ENCODE measurements at regions of chrX and their contacts with region 1.

Region 1: GRCh38 chrX:46903458-46904242 is 8.6 kb upstream of the JADE3 start:
- DNase-seq: peak; percentile 57
- ATAC-seq: peak; percentile 100
- H3K4me3 ChIP-seq: peak overlapping the region; percentile 57 to 78
- H3K27ac ChIP-seq: no peak overlapping the region
- H3K4me1 ChIP-seq: 0 out of 2 replicates have a peak, but pooled peaks cover 3% of the 10 kb centered on the region
- H3K27me3 ChIP-seq: no peaks in the 10 kb centered on the region
- CTCF ChIP-seq: peak; percentile 93

Region 2: GRCh38 chrX:46758163-46758905 is 145.3 kb before region 1 on chrX:
- CTCF ChIA-PET with region 1: no interaction called
- POLR2A ChIA-PET with region 1: no interaction called
- in situ Hi-C with region 1: no loop called
- intact Hi-C with region 1: no loop called
- DNase-seq: no peak
- ATAC-seq: peak; percentile 62
- H3K4me3 ChIP-seq: peak overlapping the region; percentile 65 to 90
- H3K27ac ChIP-seq: peak overlapping the region; percentile 83
- H3K4me1 ChIP-seq: peaks cover 16% of the 10 kb centered on the region
- H3K27me3 ChIP-seq: no peaks in the 10 kb centered on the region
- CTCF ChIP-seq: no peak

Region 3: GRCh38 chrX:46836701-46837557 is 66.7 kb before region 1 on chrX and contains the start of gene RP2:
- CTCF ChIA-PET with region 1: no interaction called
- POLR2A ChIA-PET with region 1: no interaction called
- in situ Hi-C with region 1: no loop called
- intact Hi-C with region 1: no loop called
- DNase-seq: peak; percentile 61
- ATAC-seq: peak; percentile 99
- H3K4me3 ChIP-seq: peak within 1 kb of the TSS; percentile 92 to 94
- H3K27ac ChIP-seq: peak within 1 kb of the TSS; percentile 93
- H3K4me1 ChIP-seq: peaks cover 8% of the 10 kb centered on the region
- H3K27me3 ChIP-seq: no peaks in the 10 kb centered on the region
- CTCF ChIP-seq: no peak
- total RNA-seq, gene RP2: 17.3 TPM

Region 4: DNA sequence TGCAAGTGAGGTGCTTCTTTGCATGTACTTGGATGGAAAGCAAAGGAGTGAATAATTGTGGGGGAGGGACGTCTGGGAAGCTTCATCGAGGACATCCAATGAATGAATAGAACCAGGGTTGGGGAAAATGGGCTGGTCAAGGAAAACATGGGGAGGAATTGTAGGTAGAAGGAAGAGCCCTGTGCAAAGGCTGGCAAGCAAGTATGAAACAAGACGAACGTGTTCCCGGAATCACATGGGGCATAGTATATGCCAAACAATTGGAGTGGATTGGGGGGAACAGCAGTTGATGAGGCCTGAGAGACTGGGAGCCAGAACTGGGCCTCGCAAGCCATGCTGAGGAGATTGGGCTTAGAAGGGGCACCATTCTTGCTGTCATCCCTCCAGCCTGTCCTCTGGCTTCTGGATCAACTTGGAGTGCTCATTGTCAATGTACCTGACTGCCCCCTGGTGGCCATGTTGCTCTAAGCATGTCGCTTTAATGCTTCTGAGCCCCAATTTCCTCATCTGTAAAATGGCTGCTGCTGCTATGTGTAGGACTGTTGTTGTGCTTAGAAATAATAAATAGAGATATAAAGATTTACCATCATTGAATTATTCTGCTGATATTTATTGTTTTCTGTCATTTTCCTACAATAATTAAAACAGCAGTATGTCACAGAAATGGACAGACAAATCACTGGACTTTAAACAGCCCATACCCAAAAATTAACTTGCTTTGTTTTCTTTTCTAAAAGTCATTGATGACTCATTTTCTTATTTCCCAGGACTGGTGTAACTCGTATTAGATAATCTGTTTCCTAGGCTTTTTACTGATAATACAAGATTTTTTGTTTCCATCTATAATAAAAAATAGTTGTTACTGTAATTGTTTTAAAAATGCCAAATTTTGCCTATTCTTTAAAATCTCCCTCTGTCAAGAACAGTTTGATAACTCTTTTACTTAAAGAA is 75.0 kb after region 1 on chrX:
- CTCF ChIA-PET with region 1: no interaction called
- POLR2A ChIA-PET with region 1: no interaction called
- in situ Hi-C with region 1: no loop called
- intact Hi-C with region 1: loop called (anchors 2 kb)
- DNase-seq: peak; percentile 64
- ATAC-seq: peak; percentile 96
- H3K4me3 ChIP-seq: no peak overlapping the region
- H3K27ac ChIP-seq: peak overlapping the region; percentile 66
- H3K4me1 ChIP-seq: peaks cover 12% of the 10 kb centered on the region; the same call in 1 of the 2 replicates
- H3K27me3 ChIP-seq: no peaks in the 10 kb centered on the region
- CTCF ChIP-seq: peak; percentile 84

Region 5: DNA sequence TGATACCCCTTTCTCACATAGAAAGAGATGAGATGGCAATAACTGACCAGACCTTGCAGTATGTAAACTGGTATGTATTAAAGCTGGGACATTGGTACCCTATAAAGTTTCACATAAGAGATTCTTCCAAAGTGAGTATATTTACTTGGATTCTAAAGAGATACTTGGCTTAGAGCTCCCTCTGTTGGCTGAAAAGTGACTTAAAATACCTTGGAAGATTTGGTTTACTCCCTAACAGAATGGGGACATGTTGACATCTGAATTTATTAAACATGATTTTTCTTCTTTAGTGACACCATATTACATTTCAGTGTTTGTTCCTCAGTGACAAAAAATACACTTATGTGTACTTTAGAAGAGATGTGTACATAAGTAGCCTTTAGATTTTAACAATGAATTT is 126.7 kb after region 1 on chrX:
- CTCF ChIA-PET with region 1: interaction called, 6 read pairs
- POLR2A ChIA-PET with region 1: no interaction called
- in situ Hi-C with region 1: no loop called
- intact Hi-C with region 1: loop called (anchors 2 kb)
- DNase-seq: peak; percentile 33
- ATAC-seq: peak; percentile 80
- H3K4me3 ChIP-seq: no peak overlapping the region
- H3K27ac ChIP-seq: no peak overlapping the region
- H3K4me1 ChIP-seq: no peaks in the 10 kb centered on the region
- H3K27me3 ChIP-seq: no peaks in the 10 kb centered on the region
- CTCF ChIP-seq: peak; percentile 67; the same call in 1 of the 2 replicates

Region 6: GRCh38 chrX:47093248-47093647 is 189.6 kb after region 1 on chrX:
- CTCF ChIA-PET with region 1: no interaction called
- POLR2A ChIA-PET with region 1: no interaction called
- in situ Hi-C with region 1: no loop called
- intact Hi-C with region 1: loop called (anchors 10 kb)
- DNase-seq: peak; percentile 1
- ATAC-seq: no peak
- H3K4me3 ChIP-seq: no peak overlapping the region
- H3K27ac ChIP-seq: no peak overlapping the region
- H3K4me1 ChIP-seq: no peaks in the 10 kb centered on the region
- H3K27me3 ChIP-seq: no peaks in the 10 kb centered on the region
- CTCF ChIP-seq: peak; percentile 53; the same call in 1 of the 2 replicates